ENCODE measurements at regions of chr9 and their contacts with region 1.

Region 1: GRCh38 chr9:19048966-19049916 is at the start of gene RRAGA:
- DNase-seq: peak; percentile 94
- H3K4me3 ChIP-seq: peak within 1 kb of the TSS; percentile 96 to 98
- H3K27ac ChIP-seq: peak within 1 kb of the TSS; percentile 98 to 99
- H3K4me1 ChIP-seq: peaks cover 14% of the 10 kb centered on the region
- H3K27me3 ChIP-seq: no peaks in the 10 kb centered on the region
- CTCF ChIP-seq: peak; percentile 89 to 92 (median 91)
- POLR2A ChIP-seq: peak; percentile 29
- total RNA-seq, gene RRAGA: 50.6 to 51.3 TPM

Region 2: DNA sequence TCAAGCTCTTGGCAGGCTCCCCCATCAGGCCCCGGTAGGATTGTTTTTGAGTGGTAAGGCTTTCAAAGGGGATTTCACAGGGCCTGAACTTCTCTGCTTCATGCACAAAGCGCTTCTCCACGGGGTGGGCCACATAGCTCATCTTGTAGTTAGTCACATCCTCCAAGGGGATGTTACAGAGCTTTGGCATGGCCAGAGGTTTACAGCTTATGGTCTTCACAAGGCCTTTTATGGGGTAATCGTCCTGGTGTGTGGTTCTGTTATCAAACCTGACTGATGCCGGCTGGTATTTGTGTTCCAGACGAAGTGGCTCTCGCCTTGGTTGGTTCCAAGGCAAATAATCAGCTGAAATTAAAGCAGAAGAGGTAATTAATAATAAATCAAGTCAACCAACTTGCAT is 120.5 kb before region 1 on chr9:
- intact Hi-C with region 1: no loop called
- DNase-seq: no peak
- H3K4me3 ChIP-seq: no peak overlapping the region
- H3K27ac ChIP-seq: no peak overlapping the region
- H3K4me1 ChIP-seq: no peaks in the 10 kb centered on the region
- H3K27me3 ChIP-seq: no peaks in the 10 kb centered on the region
- CTCF ChIP-seq: no peak
- POLR2A ChIP-seq: no peak

Region 3: GRCh38 chr9:19009391-19009965 is 39.8 kb before region 1 on chr9:
- intact Hi-C with region 1: no loop called
- DNase-seq: no peak
- H3K4me3 ChIP-seq: no peak overlapping the region
- H3K27ac ChIP-seq: no peak overlapping the region
- H3K4me1 ChIP-seq: no peaks in the 10 kb centered on the region
- H3K27me3 ChIP-seq: no peaks in the 10 kb centered on the region
- CTCF ChIP-seq: no peak
- POLR2A ChIP-seq: no peak

Region 4: DNA sequence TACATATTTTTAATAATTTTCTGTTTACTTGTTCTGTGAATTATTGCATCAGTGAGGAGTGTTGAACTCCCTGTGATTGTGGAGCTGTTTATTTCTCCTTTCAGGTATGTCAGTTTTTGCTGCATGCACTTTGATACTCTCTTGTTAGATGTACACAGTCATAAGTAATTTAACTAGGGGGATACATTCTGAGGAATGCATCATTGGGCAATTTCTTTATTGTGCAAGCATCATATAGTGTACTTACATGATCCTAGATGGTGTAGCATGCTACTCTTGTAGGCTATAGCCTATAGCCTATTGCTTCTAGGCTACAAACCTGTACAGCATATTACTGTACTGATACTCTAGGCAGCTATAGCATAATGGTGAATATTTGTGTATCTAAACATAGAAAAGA is 190.7 kb after region 1 on chr9:
- intact Hi-C with region 1: no loop called
- DNase-seq: no peak
- H3K4me3 ChIP-seq: no peak overlapping the region
- H3K27ac ChIP-seq: no peak overlapping the region
- H3K4me1 ChIP-seq: no peaks in the 10 kb centered on the region
- H3K27me3 ChIP-seq: no peaks in the 10 kb centered on the region
- CTCF ChIP-seq: no peak
- POLR2A ChIP-seq: no peak

Region 5: GRCh38 chr9:19441730-19442129 is 392.5 kb after region 1 on chr9:
- intact Hi-C with region 1: loop called (anchors 10 kb)
- DNase-seq: no peak
- H3K4me3 ChIP-seq: no peak overlapping the region
- H3K27ac ChIP-seq: no peak overlapping the region
- H3K4me1 ChIP-seq: no peaks in the 10 kb centered on the region
- H3K27me3 ChIP-seq: no peaks in the 10 kb centered on the region
- CTCF ChIP-seq: no peak
- POLR2A ChIP-seq: no peak